ENCODE measurements at regions of chr1 and their contacts with region 1.

Region 1: GRCh38 chr1:243447347-243447746 is 191.5 kb downstream of the SDCCAG8 start:
- DNase-seq: peak; percentile 60
- H3K4me3 Mint-ChIP-seq: no peak overlapping the region
- H3K27ac Mint-ChIP-seq: no peak overlapping the region
- H3K4me1 Mint-ChIP-seq: peaks cover 12% of the 10 kb centered on the region
- H3K27me3 Mint-ChIP-seq: no peaks in the 10 kb centered on the region

Region 2: GRCh38 chr1:243482141-243483022 is 35.0 kb after region 1 on chr1:
- intact Hi-C with region 1: loop called (anchors 5 kb)
- DNase-seq: no peak
- H3K4me3 Mint-ChIP-seq: peak overlapping the region; percentile 71
- H3K27ac Mint-ChIP-seq: no peak overlapping the region
- H3K4me1 Mint-ChIP-seq: peaks cover 14% of the 10 kb centered on the region
- H3K27me3 Mint-ChIP-seq: peaks cover 5% of the 10 kb centered on the region

Region 3: GRCh38 chr1:243539636-243540035 is 92.3 kb after region 1 on chr1:
- intact Hi-C with region 1: no loop called
- DNase-seq: no peak
- H3K4me3 Mint-ChIP-seq: no peak overlapping the region
- H3K27ac Mint-ChIP-seq: no peak overlapping the region
- H3K4me1 Mint-ChIP-seq: no peaks in the 10 kb centered on the region
- H3K27me3 Mint-ChIP-seq: no peaks in the 10 kb centered on the region